Kidney (tissue), 22 donors: ENCODE measurements at regions of chr6 and their contacts with region 1.

Region 1: GRCh38 chr6:31441365-31442267 is 38.2 kb downstream of the MICA start:
- DNase-seq: peak; percentile 57 to 91 (median 65)
- H3K4me3 ChIP-seq: peak overlapping the region in 1 of 3 donors; percentile 13
- H3K27ac ChIP-seq: no peak overlapping the region
- H3K4me1 ChIP-seq: no peaks in the 10 kb centered on the region
- H3K27me3 ChIP-seq: no peaks in the 10 kb centered on the region
- CTCF ChIP-seq: peak; percentile 69

Region 2: DNA sequence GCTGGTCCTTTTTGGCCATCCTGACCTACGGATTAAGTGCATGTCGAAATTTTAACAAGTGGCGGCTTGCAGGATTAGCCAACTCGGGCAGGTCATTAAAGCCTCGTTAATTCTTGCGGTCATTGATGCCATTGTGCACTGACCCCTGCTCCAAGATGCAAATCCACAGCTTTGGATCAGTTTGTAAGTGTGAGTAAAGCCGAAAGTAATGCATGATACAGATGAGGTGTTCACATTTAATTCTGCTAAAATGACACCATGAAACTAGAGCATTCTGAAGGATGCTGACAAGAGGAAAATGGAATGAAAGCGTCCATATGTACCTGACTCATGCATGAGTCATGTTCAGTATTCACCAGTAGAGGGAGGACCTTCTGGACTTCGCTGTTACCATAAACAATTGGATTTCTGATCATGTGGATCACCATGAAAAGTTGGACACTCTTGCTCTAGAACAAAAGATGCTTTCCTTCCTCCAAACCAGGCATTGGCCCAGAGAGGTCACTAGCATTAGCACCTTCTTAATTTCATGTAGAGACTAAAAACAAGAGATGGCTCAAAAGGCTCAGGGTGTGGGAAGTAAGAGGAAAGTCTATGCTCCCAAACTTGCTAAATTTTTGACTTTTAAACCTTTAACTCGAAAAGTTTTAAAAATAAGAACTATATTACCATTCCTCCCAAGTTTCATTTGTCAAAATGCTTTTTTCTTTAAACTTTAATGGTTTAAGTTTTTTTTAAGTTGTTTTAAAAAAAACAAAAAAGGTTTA is 383.3 kb before region 1 on chr6:
- intact Hi-C with region 1: no loop called
- DNase-seq: peak in 2 of 5 donors; percentile 28 to 39
- H3K4me3 ChIP-seq: no peak overlapping the region
- H3K27ac ChIP-seq: no peak overlapping the region
- H3K4me1 ChIP-seq: no peaks in the 10 kb centered on the region
- H3K27me3 ChIP-seq: no peaks in the 10 kb centered on the region
- CTCF ChIP-seq: peak; percentile 27

Region 3: DNA sequence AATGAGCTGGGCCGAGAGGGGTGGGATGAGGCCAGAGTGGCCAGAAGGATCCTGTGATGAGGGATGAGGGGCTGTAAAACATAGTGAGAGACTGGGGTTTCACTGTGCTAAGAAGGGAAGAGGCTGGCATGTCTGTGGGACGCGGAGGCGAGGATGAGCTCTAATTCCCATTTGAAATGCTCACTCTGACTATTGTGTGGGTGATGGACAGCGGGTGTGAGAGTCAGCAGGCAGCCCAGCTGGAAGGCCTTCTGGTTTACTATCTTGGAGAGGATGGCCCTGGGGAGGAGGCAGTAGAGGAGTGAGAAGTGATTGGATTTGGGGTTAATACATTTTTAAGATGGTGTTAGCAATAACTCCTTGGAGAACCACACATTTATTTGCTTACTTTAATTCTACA is 47.7 kb before region 1 on chr6:
- intact Hi-C with region 1: loop called (anchors 5 kb)
- DNase-seq: no peak
- H3K4me3 ChIP-seq: no peak overlapping the region
- H3K27ac ChIP-seq: no peak overlapping the region
- H3K4me1 ChIP-seq: no peaks in the 10 kb centered on the region
- H3K27me3 ChIP-seq: no peaks in the 10 kb centered on the region
- CTCF ChIP-seq: no peak